ENCODE measurements at regions of chr7 and their contacts with region 1.

Region 1: GRCh38 chr7:29900745-29901144 is 88.9 kb downstream of the SCRN1 start:
- DNase-seq: no peak
- H3K4me3 ChIP-seq: no peak overlapping the region
- H3K27ac ChIP-seq: no peak overlapping the region
- H3K4me1 ChIP-seq: no peaks in the 10 kb centered on the region
- H3K27me3 ChIP-seq: no peaks in the 10 kb centered on the region
- CTCF ChIP-seq: no peak

Region 2: DNA sequence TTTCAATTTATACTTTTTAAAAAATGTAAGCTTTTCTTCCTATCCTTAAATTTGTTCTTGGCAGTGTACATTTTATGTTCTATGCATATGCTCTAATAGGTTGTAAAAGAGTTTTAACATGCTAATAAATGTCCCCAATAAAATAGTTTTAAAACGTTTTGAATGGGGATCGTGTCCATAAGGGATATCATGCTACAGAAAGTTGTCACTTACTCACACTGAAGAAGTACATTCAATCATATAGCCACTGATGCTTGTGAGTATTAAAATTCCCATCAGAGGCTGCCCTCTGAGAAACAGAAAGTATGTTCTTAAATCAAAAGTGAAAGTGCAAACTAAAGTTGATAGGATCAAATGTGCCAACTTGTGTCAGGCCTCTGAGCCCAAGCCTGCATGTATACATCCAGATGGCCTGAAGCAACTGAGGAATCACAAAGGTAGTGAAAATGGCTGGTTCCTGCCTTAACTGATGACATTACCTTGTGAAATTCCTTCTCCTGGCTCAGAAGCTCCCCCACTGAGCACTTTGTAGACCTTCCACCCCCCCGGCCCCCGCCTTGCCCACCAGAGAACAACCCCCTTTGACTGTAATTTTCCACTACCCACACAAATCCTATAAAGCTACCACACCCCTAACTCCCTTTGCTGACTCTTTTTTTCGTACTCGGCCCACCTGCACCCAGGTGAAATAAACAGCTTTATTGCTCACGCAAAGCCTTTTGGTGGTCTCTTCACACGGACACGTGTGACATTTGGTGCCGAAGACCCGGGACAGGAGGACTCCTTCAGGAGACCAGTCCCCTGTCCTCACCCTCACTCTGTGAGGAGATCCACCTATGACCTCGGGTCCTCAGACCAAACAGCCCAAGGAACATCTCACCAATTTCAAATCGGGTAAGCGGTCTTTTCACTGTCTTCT is 578.7 kb after region 1 on chr7:
- CTCF ChIA-PET with region 1: no interaction called
- POLR2A ChIA-PET with region 1: interaction called, 12 read pairs
- intact Hi-C with region 1: no loop called
- DNase-seq: peak; percentile 32
- H3K4me3 ChIP-seq: peak overlapping the region; percentile 77
- H3K27ac ChIP-seq: no peak overlapping the region
- H3K4me1 ChIP-seq: no peaks in the 10 kb centered on the region
- H3K27me3 ChIP-seq: no peaks in the 10 kb centered on the region
- CTCF ChIP-seq: no peak